Mammary epithelial cell (primary cell): ENCODE measurements at regions of chr16 and their contacts with region 1.

Region 1: DNA sequence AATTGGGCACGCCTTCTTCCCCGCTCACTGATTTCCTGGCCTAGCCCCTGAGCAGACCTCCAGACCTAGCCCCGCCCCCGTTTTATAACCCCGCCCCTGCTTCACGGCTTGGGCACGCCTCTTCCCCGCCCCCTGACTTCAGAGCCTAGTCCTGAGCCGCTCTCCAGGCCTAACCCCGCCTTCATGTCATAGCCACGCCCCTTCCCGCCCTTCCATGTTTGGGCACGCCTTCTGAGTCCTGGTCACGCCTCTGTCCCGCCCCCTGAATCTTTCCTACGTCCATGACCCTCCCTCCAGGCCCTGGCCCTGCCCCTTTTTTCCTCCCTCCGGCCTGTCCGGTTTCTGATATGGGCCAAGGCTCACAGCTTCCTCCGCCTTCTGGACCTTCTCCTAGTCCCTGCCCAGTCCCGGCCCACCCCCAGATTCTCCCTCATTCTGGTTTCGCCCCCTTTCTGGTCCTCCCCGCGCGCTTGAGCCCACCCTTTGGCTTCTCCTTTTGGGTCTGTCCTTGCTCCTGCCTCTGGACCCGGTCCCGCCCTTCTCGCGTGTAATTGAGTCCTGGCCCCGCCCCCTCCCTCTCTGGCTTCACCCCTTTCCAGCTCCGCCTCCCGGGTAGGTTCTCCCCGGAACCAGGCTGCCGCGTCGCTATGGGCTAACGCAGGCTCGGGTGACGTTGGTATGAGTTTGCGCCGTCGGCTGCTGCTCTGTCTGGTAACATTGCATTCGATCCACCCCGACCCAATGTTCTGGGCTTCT is 15.1 kb upstream of the EEF2K start:
- DNase-seq: peak; percentile 99
- H3K4me3 ChIP-seq: peak overlapping the region; percentile 48 to 66 (median 56)
- H3K27ac ChIP-seq: peak overlapping the region; percentile 94
- H3K4me1 ChIP-seq: peaks cover 35% of the 10 kb centered on the region
- H3K27me3 ChIP-seq: no peaks in the 10 kb centered on the region
- CTCF ChIP-seq: no peak

Region 2: DNA sequence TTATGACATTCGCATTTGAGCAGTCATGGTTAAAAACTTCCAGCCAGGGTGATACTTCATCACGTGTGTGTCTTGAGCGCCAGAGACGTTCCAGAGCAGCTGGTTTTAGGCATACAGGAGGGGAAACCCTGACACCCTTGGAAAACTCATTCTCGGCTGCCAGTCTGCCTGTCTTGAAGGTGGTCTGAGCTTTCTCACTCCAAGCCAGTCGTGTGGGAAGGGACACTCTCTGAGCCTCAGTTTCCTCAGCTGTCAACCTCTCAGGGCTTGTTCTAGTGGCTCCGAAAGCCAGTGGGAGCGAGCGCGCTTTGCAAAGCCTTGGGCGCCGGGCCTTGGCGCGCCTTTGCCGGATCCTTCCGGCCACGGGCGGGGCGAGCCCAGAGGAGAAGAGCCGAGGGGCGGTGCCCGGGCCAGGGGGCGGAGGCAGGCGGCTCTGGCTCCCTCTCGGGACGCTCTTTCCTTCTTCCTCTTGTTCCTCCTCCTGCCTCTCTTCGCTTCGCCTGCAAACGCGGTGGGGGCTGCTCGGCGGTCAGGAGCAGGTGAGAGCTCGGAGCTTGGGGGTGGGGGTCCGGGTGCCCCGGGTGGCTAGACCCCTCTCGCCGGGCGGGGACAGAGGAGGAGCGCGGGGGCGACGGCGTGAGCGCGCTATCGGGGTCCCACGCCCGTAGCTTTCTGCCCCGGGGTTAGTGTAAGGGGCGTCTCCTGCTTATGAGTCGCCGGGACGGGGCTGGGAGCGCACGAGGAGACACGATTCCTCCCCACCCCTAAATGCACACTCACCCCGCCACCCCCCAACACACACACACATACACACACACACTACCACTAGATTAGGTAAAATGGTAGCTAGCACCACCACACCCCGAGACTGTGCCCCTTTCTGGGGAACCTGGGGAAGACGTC is 1032.5 kb before region 1 on chr16 and contains the start of gene LDAF1:
- CTCF ChIA-PET with region 1: no interaction called
- dilution Hi-C with region 1: no loop called
- in situ Hi-C with region 1: no loop called
- intact Hi-C with region 1: loop called (anchors 5 kb)
- DNase-seq: peak; percentile 83
- H3K4me3 ChIP-seq: peak within 1 kb of the TSS; percentile 74 to 76 (median 76)
- H3K27ac ChIP-seq: peak within 1 kb of the TSS; percentile 74
- H3K4me1 ChIP-seq: peaks cover 14% of the 10 kb centered on the region
- H3K27me3 ChIP-seq: no peaks in the 10 kb centered on the region
- CTCF ChIP-seq: no peak
- total RNA-seq, gene LDAF1: 43.5 to 131 TPM

Region 3: GRCh38 chr16:21952793-21953540 is 238.0 kb before region 1 on chr16 and contains the start of gene UQCRC2:
- CTCF ChIA-PET with region 1: interaction called, 19 read pairs
- dilution Hi-C with region 1: no loop called
- in situ Hi-C with region 1: no loop called
- intact Hi-C with region 1: loop called (anchors 1 kb)
- DNase-seq: peak; percentile 93
- H3K4me3 ChIP-seq: peak within 1 kb of the TSS; percentile 83 to 99 (median 96)
- H3K27ac ChIP-seq: peak within 1 kb of the TSS; percentile 99
- H3K4me1 ChIP-seq: peaks cover 23% of the 10 kb centered on the region
- H3K27me3 ChIP-seq: no peaks in the 10 kb centered on the region
- CTCF ChIP-seq: no peak
- total RNA-seq, gene UQCRC2: 181 to 205 TPM

Region 4: DNA sequence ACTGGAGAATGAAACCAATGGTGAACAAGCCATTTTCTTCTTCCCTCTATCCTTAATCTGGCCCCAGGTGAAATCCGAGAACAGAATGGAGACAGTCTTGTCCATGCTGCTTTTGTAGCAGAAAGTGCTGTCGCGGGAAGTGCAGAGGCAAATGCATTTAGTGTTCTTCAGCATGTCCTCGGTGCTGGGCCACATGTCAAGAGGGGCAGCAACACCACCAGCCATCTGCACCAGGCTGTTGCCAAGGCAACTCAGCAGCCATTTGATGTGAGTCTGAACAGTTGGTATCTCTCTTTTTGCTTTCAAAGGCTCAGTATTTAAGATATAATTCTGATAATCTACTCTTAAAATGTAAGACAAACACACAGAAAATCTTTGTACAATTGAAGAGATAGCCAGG is 219.1 kb before region 1 on chr16:
- CTCF ChIA-PET with region 1: no interaction called
- dilution Hi-C with region 1: no loop called
- in situ Hi-C with region 1: no loop called
- intact Hi-C with region 1: no loop called
- DNase-seq: no peak
- H3K4me3 ChIP-seq: no peak overlapping the region
- H3K27ac ChIP-seq: no peak overlapping the region
- H3K4me1 ChIP-seq: no peaks in the 10 kb centered on the region
- H3K27me3 ChIP-seq: no peaks in the 10 kb centered on the region
- CTCF ChIP-seq: no peak

Region 5: DNA sequence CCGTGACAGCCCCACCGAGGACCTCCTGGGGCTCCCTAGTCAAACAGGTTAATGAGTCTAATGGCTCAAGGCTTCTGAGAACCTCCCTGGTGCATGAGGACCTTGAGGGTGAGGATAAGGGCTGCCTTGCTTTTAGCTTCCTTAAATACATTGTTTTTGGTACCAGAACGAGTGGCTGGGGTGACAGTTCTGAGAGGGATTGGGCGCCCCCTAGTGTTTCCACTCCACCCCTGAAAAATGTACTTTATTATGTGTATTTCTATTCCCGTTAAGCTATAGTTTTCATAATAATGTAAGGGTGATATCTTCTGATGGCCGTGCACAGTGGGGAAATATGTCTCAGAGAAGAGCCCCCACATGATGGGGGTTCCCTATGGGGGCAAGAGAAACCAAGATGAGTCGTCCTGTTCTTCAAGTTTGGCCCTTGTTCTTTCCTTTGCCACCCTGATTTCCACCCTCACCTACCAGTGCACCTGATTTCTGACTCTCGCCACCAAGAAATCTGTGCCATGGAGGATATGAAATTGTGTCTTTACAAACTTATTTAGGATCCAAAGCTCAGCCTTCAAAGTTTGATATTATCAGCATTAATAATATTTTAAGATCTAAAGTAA is 113.1 kb before region 1 on chr16:
- CTCF ChIA-PET with region 1: interaction called, 6 read pairs
- dilution Hi-C with region 1: no loop called
- in situ Hi-C with region 1: no loop called
- intact Hi-C with region 1: loop called (anchors 1 kb)
- DNase-seq: peak; percentile 37
- H3K4me3 ChIP-seq: no peak overlapping the region
- H3K27ac ChIP-seq: no peak overlapping the region
- H3K4me1 ChIP-seq: peaks cover 25% of the 10 kb centered on the region
- H3K27me3 ChIP-seq: no peaks in the 10 kb centered on the region
- CTCF ChIP-seq: peak; percentile 60 to 80

Region 6: GRCh38 chr16:22117609-22118008 is 73.3 kb before region 1 on chr16:
- CTCF ChIA-PET with region 1: no interaction called
- dilution Hi-C with region 1: no loop called
- in situ Hi-C with region 1: no loop called
- intact Hi-C with region 1: loop called (anchors 5 kb)
- DNase-seq: peak; percentile 92
- H3K4me3 ChIP-seq: no peak overlapping the region
- H3K27ac ChIP-seq: no peak overlapping the region
- H3K4me1 ChIP-seq: peaks cover 3% of the 10 kb centered on the region
- H3K27me3 ChIP-seq: peaks cover 2% of the 10 kb centered on the region
- CTCF ChIP-seq: no peak

Region 7: DNA sequence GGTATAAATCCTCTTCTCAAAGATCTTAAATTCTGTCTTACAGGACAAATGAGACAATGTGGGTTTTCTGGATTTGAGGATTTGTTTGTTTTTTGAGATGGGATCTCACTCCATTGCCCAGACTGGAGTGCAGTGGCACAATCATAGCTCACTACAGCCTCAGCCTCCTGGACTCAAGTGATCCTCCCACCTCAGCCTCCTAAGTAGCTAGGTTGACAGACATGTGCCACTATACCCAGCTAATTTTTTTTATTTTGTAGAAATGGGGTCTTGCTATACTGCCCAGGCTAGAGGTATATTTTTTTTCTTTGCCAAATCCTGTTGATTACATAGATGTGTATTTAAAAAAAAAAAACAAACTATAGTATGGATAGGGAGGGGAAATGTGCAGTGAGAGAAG is 60.4 kb before region 1 on chr16:
- CTCF ChIA-PET with region 1: no interaction called
- dilution Hi-C with region 1: no loop called
- in situ Hi-C with region 1: no loop called
- intact Hi-C with region 1: no loop called
- DNase-seq: no peak
- H3K4me3 ChIP-seq: no peak overlapping the region
- H3K27ac ChIP-seq: no peak overlapping the region
- H3K4me1 ChIP-seq: no peaks in the 10 kb centered on the region
- H3K27me3 ChIP-seq: no peaks in the 10 kb centered on the region
- CTCF ChIP-seq: no peak

Region 8: DNA sequence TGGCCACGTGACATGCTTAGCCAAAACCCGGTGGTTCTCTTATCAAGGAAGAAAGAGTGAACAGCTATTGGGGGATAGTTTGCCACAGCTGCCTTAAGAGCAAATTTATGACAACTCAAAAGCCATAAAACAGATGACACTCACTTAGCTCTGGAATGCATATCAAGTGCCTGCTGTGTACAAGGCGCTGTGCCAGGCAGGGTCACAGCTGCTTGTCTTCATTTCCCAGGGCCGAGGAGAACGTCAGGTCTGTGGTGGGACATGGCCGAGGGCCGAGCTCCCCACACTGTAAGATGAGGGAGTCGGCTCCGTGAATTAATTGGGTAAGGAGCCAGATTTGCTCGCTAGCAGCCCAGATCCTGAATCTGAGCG is 29.1 kb after region 1 on chr16:
- CTCF ChIA-PET with region 1: no interaction called
- dilution Hi-C with region 1: no loop called
- in situ Hi-C with region 1: no loop called
- intact Hi-C with region 1: loop called (anchors 1 kb)
- DNase-seq: no peak
- H3K4me3 ChIP-seq: no peak overlapping the region
- H3K27ac ChIP-seq: no peak overlapping the region
- H3K4me1 ChIP-seq: no peaks in the 10 kb centered on the region
- H3K27me3 ChIP-seq: no peaks in the 10 kb centered on the region
- CTCF ChIP-seq: no peak

Region 9: DNA sequence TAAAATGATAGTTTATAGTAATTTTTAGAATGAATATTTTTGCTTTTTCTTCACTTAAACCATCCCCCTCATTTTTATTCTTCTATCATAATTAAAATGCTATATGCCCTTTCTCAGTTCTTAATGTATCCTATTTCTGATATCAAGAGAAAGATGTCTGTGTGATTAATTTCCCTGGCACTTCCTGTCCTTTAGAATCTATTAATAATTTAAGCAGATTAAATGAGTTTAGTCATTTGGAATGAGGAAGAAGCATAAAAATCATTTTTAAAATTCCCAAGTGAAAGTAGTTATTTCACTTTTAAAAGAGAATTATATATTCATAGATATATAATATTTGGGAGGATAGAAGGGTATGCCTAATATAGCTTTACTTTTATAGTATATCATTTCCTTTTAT is 211.2 kb after region 1 on chr16:
- CTCF ChIA-PET with region 1: no interaction called
- dilution Hi-C with region 1: no loop called
- in situ Hi-C with region 1: no loop called
- intact Hi-C with region 1: no loop called
- DNase-seq: no peak
- H3K4me3 ChIP-seq: no peak overlapping the region
- H3K27ac ChIP-seq: peak overlapping the region; percentile 53
- H3K4me1 ChIP-seq: peaks cover 28% of the 10 kb centered on the region
- H3K27me3 ChIP-seq: no peaks in the 10 kb centered on the region
- CTCF ChIP-seq: no peak

Region 10: GRCh38 chr16:23952128-23952970 is 1761.4 kb after region 1 on chr16:
- CTCF ChIA-PET with region 1: no interaction called
- dilution Hi-C with region 1: no loop called
- in situ Hi-C with region 1: no loop called
- intact Hi-C with region 1: no loop called
- DNase-seq: no peak
- H3K4me3 ChIP-seq: no peak overlapping the region
- H3K27ac ChIP-seq: no peak overlapping the region
- H3K4me1 ChIP-seq: no peaks in the 10 kb centered on the region
- H3K27me3 ChIP-seq: no peaks in the 10 kb centered on the region
- CTCF ChIP-seq: no peak